PC-3 (cell line): ENCODE measurements at regions of chr6 and their contacts with region 1.

Region 1: GRCh38 chr6:19697744-19698290 is 139.4 kb upstream of the ID4 start:
- DNase-seq: peak; percentile 78
- ATAC-seq: peak; percentile 82
- H3K4me3 ChIP-seq: no peak overlapping the region
- H3K27ac ChIP-seq: 0 out of 2 replicates have a peak overlapping the region, but pooled peaks have one; percentile 4
- H3K4me1 ChIP-seq: peaks cover 5% of the 10 kb centered on the region; the same call in 1 of the 2 replicates
- H3K27me3 ChIP-seq: no peaks in the 10 kb centered on the region
- CTCF ChIP-seq: no peak

Region 2: DNA sequence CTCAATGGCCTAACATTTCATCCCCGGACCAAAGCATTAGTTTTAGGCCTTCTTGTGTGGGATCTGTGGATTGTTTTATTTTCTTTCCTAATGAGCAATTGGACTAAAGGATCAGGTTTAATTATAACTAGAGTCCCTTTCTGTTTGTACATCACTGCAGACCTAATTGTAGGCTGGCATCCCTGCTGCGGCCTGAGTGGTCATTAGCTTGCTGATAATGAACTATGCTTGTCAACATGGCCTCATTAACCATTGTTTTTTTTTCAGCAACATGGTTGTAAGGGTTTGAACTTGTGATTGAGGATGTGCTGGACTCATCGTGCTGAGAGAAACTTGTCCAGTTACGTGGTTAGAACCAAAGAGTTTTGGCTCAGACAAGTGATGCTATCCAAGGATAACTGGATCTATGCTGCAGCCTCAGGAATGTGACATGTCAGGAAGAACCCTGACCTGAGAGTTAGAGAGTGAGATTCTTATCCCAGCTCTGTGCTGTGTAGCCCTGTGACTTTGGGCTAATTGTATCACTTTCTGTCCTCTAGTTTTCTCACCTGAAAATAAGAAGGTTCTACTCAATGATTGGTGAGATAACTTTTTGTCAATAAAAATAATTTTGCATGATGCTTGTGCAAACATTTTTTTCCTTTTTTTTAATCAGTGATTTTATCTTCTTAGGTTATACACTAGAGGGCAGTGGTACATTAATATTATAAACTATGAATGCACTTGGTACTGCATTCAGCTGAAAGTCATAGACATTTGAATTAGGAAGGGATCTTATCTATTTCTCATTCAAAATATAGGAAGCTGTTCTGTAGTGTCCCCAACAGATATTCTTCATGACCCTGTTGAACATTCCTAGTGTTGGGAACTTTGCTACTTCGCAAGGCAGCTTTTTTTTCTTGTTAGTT is 1169.7 kb before region 1 on chr6:
- CTCF ChIA-PET with region 1: interaction called, 14 read pairs
- POLR2A ChIA-PET with region 1: no interaction called
- intact Hi-C with region 1: no loop called
- DNase-seq: peak; percentile 55
- ATAC-seq: peak; percentile 68
- H3K4me3 ChIP-seq: no peak overlapping the region
- H3K27ac ChIP-seq: no peak overlapping the region
- H3K4me1 ChIP-seq: no peaks in the 10 kb centered on the region
- H3K27me3 ChIP-seq: peaks cover 18% of the 10 kb centered on the region
- CTCF ChIP-seq: peak; percentile 72